ENCODE measurements at regions of chr10 and their contacts with region 1.

Region 1: DNA sequence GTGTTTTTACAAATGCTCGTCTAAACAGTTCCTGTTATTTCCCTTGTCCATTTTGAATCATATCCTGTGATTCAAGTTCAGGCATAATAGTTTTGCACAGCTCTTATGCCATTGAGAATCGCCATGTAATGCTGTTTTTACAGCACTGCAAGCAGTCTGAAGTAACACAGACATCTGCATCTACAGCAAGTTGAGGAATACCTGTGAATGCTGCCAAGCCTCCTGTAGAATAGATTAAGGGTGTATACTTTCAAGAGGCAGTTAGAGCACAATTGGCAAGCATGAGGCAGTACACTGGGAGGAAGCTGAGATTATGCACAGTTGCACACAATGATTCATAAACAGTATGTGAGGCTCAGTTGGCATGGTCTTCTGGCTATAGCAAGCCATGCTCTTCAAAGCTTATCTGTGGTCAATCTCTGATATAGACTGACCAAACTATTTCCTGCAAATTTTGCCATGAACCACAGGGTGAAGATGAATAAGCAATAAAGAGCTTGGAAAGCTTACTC is 121.9 kb upstream of the AKR1E2 start:
- DNase-seq: peak; percentile 61
- H3K4me3 Mint-ChIP-seq: peak overlapping the region; percentile 36
- H3K27ac Mint-ChIP-seq: peak overlapping the region; percentile 98
- H3K4me1 Mint-ChIP-seq: peaks cover 55% of the 10 kb centered on the region
- H3K27me3 Mint-ChIP-seq: no peaks in the 10 kb centered on the region
- CTCF ChIP-seq: no peak

Region 2: DNA sequence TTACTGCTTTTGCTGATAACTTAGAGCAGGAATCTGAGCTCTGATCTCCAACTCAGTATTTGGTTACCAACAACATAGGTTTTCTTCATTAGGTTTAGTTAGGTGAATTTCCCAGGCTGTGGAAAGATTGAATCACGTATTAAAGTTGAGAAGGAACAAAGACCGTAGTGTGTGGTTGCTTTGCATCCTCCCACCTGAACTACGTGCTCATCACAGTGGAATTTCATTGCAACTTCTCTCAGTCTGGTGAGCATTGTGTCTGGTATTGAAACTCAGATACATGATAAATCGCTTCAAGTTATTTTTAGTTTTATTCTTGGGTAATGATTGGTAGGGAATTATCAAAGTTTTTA is 17.5 kb before region 1 on chr10:
- CTCF ChIA-PET with region 1: interaction called, 7 read pairs
- intact Hi-C with region 1: loop called (anchors 2 kb)
- DNase-seq: peak; percentile 70
- H3K4me3 Mint-ChIP-seq: peak overlapping the region; percentile 32
- H3K27ac Mint-ChIP-seq: peak overlapping the region; percentile 98
- H3K4me1 Mint-ChIP-seq: peaks cover 72% of the 10 kb centered on the region
- H3K27me3 Mint-ChIP-seq: no peaks in the 10 kb centered on the region
- CTCF ChIP-seq: no peak

Measured in Calu3 (cell line).